ENCODE measurements at regions of chr18 and their contacts with region 1.

Region 1: GRCh38 chr18:59899298-59900221 is at the start of gene PMAIP1:
- DNase-seq: peak; percentile 78 to 93
- H3K4me3 ChIP-seq: peak within 1 kb of the TSS; percentile 66 to 93 (median 76)
- H3K27ac ChIP-seq: peak within 1 kb of the TSS; percentile 92
- H3K4me1 ChIP-seq: peaks cover 4 to 19% (median 8%) of the 10 kb centered on the region in 4 experiments; a peak in 5 of 7 replicates
- H3K27me3 ChIP-seq: peaks cover 0 to 6% (median 0%) of the 10 kb centered on the region in 4 experiments; a peak in 2 of 7 replicates
- CTCF ChIP-seq: no peak
- EP300 ChIP-seq: 0 out of 3 replicates have a peak, but pooled peaks of 1 of the 2 experiments have one; percentile 72
- POLR2A ChIP-seq: peak; percentile 99
- RAD21 ChIP-seq: no peak; a peak in 1 of 4 replicates
- total RNA-seq, gene PMAIP1: 75.1 and 84.1 TPM in 2 replicates

Region 2: DNA sequence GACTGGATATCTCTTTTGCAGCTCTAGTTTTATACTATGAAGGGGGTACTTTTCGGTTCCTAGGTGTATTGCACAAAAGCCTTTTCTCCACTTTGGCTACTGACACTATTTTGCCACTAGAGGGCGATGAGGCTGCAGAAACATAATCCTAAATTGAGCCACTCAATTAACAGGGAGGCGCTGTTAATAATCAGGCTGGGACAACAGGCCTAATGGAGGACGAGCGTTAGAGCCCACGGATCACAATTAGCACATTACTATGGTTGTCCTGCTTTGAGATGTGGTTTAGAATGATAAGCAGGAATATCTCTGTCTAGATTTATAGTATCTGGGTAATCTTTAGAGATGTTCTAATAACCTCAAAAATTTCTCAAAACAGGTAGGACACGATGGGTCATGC is 62.0 kb before region 1 on chr18:
- CTCF ChIA-PET with region 1: interaction called, 11 read pairs
- POLR2A ChIA-PET with region 1: interaction called, 69 read pairs
- DNase-seq: peak in 1 of 2 experiments; percentile 36
- H3K4me3 ChIP-seq: no peak overlapping the region
- H3K27ac ChIP-seq: no peak overlapping the region
- H3K4me1 ChIP-seq: peaks cover 0 to 15% (median 7%) of the 10 kb centered on the region in 4 experiments; a peak in 5 of 7 replicates
- H3K27me3 ChIP-seq: no peaks in the 10 kb centered on the region
- CTCF ChIP-seq: peak in 2 of 3 experiments; percentile 85 to 90; a peak in 3 of 4 replicates
- EP300 ChIP-seq: 0 out of 3 replicates have a peak, but pooled peaks of 1 of the 2 experiments have one; percentile 45
- POLR2A ChIP-seq: no peak
- RAD21 ChIP-seq: peak; percentile 86 to 93

Region 3: GRCh38 chr18:59861963-59862819 is 37.4 kb before region 1 on chr18:
- CTCF ChIA-PET with region 1: interaction called, 4 read pairs
- POLR2A ChIA-PET with region 1: interaction called, 116 read pairs
- DNase-seq: no peak
- H3K4me3 ChIP-seq: no peak overlapping the region
- H3K27ac ChIP-seq: no peak overlapping the region
- H3K4me1 ChIP-seq: peaks cover 0 to 30% (median 15%) of the 10 kb centered on the region in 4 experiments; a peak in 6 of 7 replicates
- H3K27me3 ChIP-seq: no peaks in the 10 kb centered on the region
- CTCF ChIP-seq: no peak
- EP300 ChIP-seq: no peak
- POLR2A ChIP-seq: no peak
- RAD21 ChIP-seq: no peak

Region 4: GRCh38 chr18:59885579-59886163 is 13.9 kb before region 1 on chr18:
- CTCF ChIA-PET with region 1: interaction called, 4 read pairs
- POLR2A ChIA-PET with region 1: interaction called, 72 read pairs
- DNase-seq: no peak
- H3K4me3 ChIP-seq: no peak overlapping the region
- H3K27ac ChIP-seq: no peak overlapping the region
- H3K4me1 ChIP-seq: peaks cover 0 to 9% (median 7%) of the 10 kb centered on the region in 4 experiments; a peak in 4 of 7 replicates
- H3K27me3 ChIP-seq: peaks cover 0 to 4% (median 0%) of the 10 kb centered on the region in 4 experiments; a peak in 1 of 7 replicates
- CTCF ChIP-seq: no peak
- EP300 ChIP-seq: no peak
- POLR2A ChIP-seq: no peak
- RAD21 ChIP-seq: no peak

Region 5: DNA sequence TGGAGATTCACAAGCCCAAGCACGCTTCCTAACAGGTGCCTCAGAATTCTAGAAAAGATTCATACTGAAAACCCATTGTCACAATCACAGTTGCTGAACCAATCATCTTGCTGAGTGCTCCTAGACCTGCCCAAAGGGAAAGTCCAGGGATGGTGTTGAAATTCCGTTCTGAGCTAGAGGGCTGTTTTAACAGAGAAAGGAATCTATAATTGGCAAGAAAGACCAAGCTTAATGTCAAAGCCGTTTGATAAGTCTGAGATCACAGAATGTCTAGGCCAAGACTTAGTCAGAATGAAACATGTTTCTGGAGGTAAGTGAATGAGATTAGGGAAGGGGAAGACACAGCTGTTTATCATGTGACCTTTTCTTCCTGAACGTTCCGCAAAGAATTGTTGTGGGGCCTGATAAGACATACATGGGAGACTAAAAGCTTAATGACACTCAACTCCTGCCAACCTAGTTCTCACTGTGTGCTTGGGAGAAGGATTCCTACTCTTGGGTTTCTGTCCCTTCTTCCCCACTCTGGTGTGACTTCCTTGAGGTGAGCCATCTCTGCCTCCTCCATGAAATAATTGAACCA is 27.8 kb after region 1 on chr18:
- CTCF ChIA-PET with region 1: no interaction called
- POLR2A ChIA-PET with region 1: interaction called, 14 read pairs
- DNase-seq: no peak
- H3K4me3 ChIP-seq: no peak overlapping the region
- H3K27ac ChIP-seq: no peak overlapping the region
- H3K4me1 ChIP-seq: no peaks in the 10 kb centered on the region
- H3K27me3 ChIP-seq: no peaks in the 10 kb centered on the region
- CTCF ChIP-seq: no peak
- EP300 ChIP-seq: no peak
- POLR2A ChIP-seq: no peak
- RAD21 ChIP-seq: no peak

Region 6: DNA sequence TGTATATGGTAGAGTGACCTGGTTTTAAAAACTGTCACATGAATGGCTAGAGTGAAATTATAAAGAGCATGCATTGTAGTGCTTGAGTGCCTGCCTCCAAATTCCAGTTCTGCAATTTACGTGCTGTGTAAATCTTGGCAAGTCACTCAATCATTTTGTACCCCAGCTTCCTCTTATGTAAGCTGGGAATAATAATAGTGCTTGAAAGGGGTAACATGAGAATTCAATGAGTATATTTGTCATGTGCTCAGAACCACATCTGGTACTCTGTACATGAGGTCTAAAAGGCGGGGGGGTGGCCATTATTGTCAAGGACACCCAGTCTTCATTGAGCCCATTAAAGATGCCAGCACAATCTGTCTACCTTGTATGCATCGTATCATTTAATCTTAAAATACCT is 258.2 kb after region 1 on chr18:
- CTCF ChIA-PET with region 1: no interaction called
- POLR2A ChIA-PET with region 1: no interaction called
- DNase-seq: no peak
- H3K4me3 ChIP-seq: no peak overlapping the region
- H3K27ac ChIP-seq: no peak overlapping the region
- H3K4me1 ChIP-seq: no peaks in the 10 kb centered on the region
- H3K27me3 ChIP-seq: no peaks in the 10 kb centered on the region
- CTCF ChIP-seq: no peak
- EP300 ChIP-seq: no peak
- POLR2A ChIP-seq: no peak
- RAD21 ChIP-seq: no peak

Measured in H1 (cell line).